Psoas muscle (tissue), 8 donors: ENCODE measurements at regions of chr3 and their contacts with region 1.

Region 1: GRCh38 chr3:53195602-53196574 is 34.9 kb downstream of the PRKCD start:
- DNase-seq: peak; percentile 55 to 76
- ATAC-seq: peak; percentile 74 to 95 (median 82)
- H3K4me3 ChIP-seq: no peak overlapping the region
- H3K27ac ChIP-seq: no peak overlapping the region
- H3K4me1 ChIP-seq: peaks cover 15% of the 10 kb centered on the region
- H3K27me3 ChIP-seq: no peaks in the 10 kb centered on the region
- CTCF ChIP-seq: peak; percentile 100

Region 2: DNA sequence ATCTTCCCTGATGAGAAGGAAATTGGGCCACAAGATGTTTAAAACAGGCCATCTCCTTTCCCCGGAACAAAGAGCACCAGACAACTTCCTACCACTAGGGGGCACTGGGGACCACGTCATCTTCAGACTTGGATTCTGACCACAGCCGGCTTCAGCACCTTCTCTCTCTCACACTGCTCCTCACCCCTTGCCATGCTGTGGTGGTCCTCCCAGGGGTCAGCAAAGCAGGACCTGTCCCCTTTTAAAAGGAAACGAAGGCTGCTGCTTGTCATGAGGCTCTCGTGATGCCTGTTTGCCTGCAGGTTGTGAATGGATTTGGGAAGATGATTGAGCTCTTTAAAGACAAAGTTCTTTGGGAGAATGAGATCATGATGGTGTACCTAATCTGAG is 81.9 kb before region 1 on chr3:
- intact Hi-C with region 1: loop called (anchors 1 kb)
- DNase-seq: peak; percentile 75 to 83
- ATAC-seq: peak; percentile 85 to 92 (median 86)
- H3K4me3 ChIP-seq: no peak overlapping the region
- H3K27ac ChIP-seq: peak overlapping the region; percentile 79
- H3K4me1 ChIP-seq: peaks cover 28% of the 10 kb centered on the region
- H3K27me3 ChIP-seq: no peaks in the 10 kb centered on the region
- CTCF ChIP-seq: peak; percentile 90

Region 3: GRCh38 chr3:53130179-53131061 is 65.5 kb before region 1 on chr3 and contains the start of gene RFT1:
- intact Hi-C with region 1: loop called in 1 of 2 experiments (anchors 5 kb)
- DNase-seq: peak; percentile 99
- ATAC-seq: peak; percentile 92 to 95 (median 94)
- H3K4me3 ChIP-seq: peak within 1 kb of the TSS; percentile 77
- H3K27ac ChIP-seq: peak within 1 kb of the TSS; percentile 91
- H3K4me1 ChIP-seq: peaks cover 30% of the 10 kb centered on the region
- H3K27me3 ChIP-seq: no peaks in the 10 kb centered on the region
- CTCF ChIP-seq: no peak
- total RNA-seq, gene RFT1: 5.7 to 8.8 (median 6.5) TPM

Region 4: DNA sequence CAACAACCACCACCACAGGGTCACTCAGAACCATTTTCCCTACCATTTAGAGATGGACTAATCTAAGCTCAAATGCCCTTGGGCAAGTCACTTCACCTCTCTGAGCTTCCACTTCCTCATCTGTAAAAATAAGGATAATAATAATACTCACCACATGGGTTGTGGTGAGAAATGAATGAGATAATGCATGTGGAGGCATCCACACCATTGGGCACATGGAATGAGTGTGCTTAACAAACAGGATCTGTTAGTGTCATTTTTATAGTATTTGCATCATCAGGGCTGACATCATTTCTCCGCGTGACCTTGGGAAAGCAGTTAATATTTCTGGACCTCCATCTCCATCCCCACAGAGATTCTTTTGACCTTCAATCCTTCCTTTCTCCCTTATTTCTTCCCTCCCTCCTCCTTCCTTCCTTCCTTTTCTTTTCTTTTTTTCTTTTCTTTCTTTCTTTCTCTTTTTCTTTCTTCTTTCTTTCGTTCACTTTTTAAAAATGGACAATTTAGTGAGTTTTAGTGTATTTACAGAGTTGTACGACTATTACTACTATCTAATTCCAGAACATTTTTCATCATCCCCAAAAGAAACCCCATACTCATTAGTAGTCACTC is 57.9 kb before region 1 on chr3:
- intact Hi-C with region 1: loop called (anchors 2 to 5 kb)
- DNase-seq: no peak
- ATAC-seq: no peak
- H3K4me3 ChIP-seq: no peak overlapping the region
- H3K27ac ChIP-seq: no peak overlapping the region
- H3K4me1 ChIP-seq: peaks cover 11% of the 10 kb centered on the region
- H3K27me3 ChIP-seq: no peaks in the 10 kb centered on the region
- CTCF ChIP-seq: no peak

Region 5: GRCh38 chr3:53255775-53256703 is 60.2 kb after region 1 on chr3 and contains the start of gene TKT:
- intact Hi-C with region 1: no loop called
- DNase-seq: peak; percentile 89 to 91
- ATAC-seq: peak; percentile 81 to 85 (median 83)
- H3K4me3 ChIP-seq: peak within 1 kb of the TSS; percentile 99
- H3K27ac ChIP-seq: peak within 1 kb of the TSS; percentile 89
- H3K4me1 ChIP-seq: peaks cover 44% of the 10 kb centered on the region
- H3K27me3 ChIP-seq: no peaks in the 10 kb centered on the region
- CTCF ChIP-seq: no peak
- total RNA-seq, gene TKT: 16.8 to 51.9 (median 21.2) TPM

Region 6: GRCh38 chr3:53478166-53478830 is 282.4 kb after region 1 on chr3:
- intact Hi-C with region 1: no loop called
- DNase-seq: no peak
- ATAC-seq: no peak
- H3K4me3 ChIP-seq: no peak overlapping the region
- H3K27ac ChIP-seq: no peak overlapping the region
- H3K4me1 ChIP-seq: no peaks in the 10 kb centered on the region
- H3K27me3 ChIP-seq: peaks cover 0 to 21% (median 3%) of the 10 kb centered on the region in 3 donors
- CTCF ChIP-seq: no peak